ENCODE measurements at regions of chr7 and their contacts with region 1.

Region 1: GRCh38 chr7:27262121-27262520 is 19.5 kb downstream of the EVX1 start:
- DNase-seq: no peak
- ATAC-seq: no peak
- H3K4me3 ChIP-seq: no peak overlapping the region
- H3K4me3 Mint-ChIP-seq: no peak overlapping the region
- H3K27ac ChIP-seq: no peak overlapping the region
- H3K27ac Mint-ChIP-seq: no peak overlapping the region
- H3K4me1 ChIP-seq: no peaks in the 10 kb centered on the region
- H3K4me1 Mint-ChIP-seq: no peaks in the 10 kb centered on the region
- H3K27me3 ChIP-seq: peaks cover 0 to 6% of the 10 kb centered on the region in 2 experiments
- H3K27me3 Mint-ChIP-seq: peaks cover 42% of the 10 kb centered on the region
- CTCF ChIP-seq: no peak

Region 2: GRCh38 chr7:28211006-28211405 is 948.9 kb after region 1 on chr7:
- CTCF ChIA-PET with region 1: no interaction called
- POLR2A ChIA-PET with region 1: no interaction called
- intact Hi-C with region 1: loop called in 1 of 2 experiments (anchors 5 kb)
- DNase-seq: no peak
- ATAC-seq: no peak
- H3K4me3 ChIP-seq: no peak overlapping the region
- H3K4me3 Mint-ChIP-seq: no peak overlapping the region
- H3K27ac ChIP-seq: no peak overlapping the region
- H3K27ac Mint-ChIP-seq: no peak overlapping the region
- H3K4me1 ChIP-seq: no peaks in the 10 kb centered on the region
- H3K4me1 Mint-ChIP-seq: peaks cover 7% of the 10 kb centered on the region
- H3K27me3 ChIP-seq: peaks cover 0 to 3% of the 10 kb centered on the region in 2 experiments
- H3K27me3 Mint-ChIP-seq: peaks cover 16% of the 10 kb centered on the region
- CTCF ChIP-seq: no peak

Measured in CD4-positive, alpha-beta T cell (primary cell).